A673 (cell line): ENCODE measurements at regions of chr1 and their contacts with region 1.

Region 1: GRCh38 chr1:221435504-221435904 is 306.4 kb downstream of the DUSP10 start:
- DNase-seq: peak; percentile 53
- H3K4me3 ChIP-seq: no peak overlapping the region
- H3K27ac ChIP-seq: no peak overlapping the region
- H3K4me1 ChIP-seq: no peaks in the 10 kb centered on the region
- H3K27me3 ChIP-seq: no peaks in the 10 kb centered on the region
- CTCF ChIP-seq: peak; percentile 83

Region 2: GRCh38 chr1:220810179-220810653 is 625.3 kb before region 1 on chr1:
- CTCF ChIA-PET with region 1: no interaction called
- POLR2A ChIA-PET with region 1: no interaction called
- intact Hi-C with region 1: loop called (anchors 1 kb)
- DNase-seq: peak; percentile 87
- H3K4me3 ChIP-seq: peak overlapping the region; percentile 14
- H3K27ac ChIP-seq: no peak overlapping the region
- H3K4me1 ChIP-seq: peaks cover 7% of the 10 kb centered on the region
- H3K27me3 ChIP-seq: no peaks in the 10 kb centered on the region
- CTCF ChIP-seq: peak; percentile 92

Region 3: GRCh38 chr1:220873868-220874655 is 561.4 kb before region 1 on chr1:
- CTCF ChIA-PET with region 1: no interaction called
- POLR2A ChIA-PET with region 1: no interaction called
- intact Hi-C with region 1: loop called (anchors 1 kb)
- DNase-seq: peak; percentile 52
- H3K4me3 ChIP-seq: no peak overlapping the region
- H3K27ac ChIP-seq: no peak overlapping the region
- H3K4me1 ChIP-seq: no peaks in the 10 kb centered on the region
- H3K27me3 ChIP-seq: peaks cover 41% of the 10 kb centered on the region
- CTCF ChIP-seq: peak; percentile 72

Region 4: GRCh38 chr1:221263831-221264767 is 171.4 kb before region 1 on chr1:
- CTCF ChIA-PET with region 1: interaction called, 15 read pairs
- POLR2A ChIA-PET with region 1: no interaction called
- intact Hi-C with region 1: loop called (anchors 2 kb)
- DNase-seq: peak; percentile 83
- H3K4me3 ChIP-seq: no peak overlapping the region
- H3K27ac ChIP-seq: no peak overlapping the region
- H3K4me1 ChIP-seq: no peaks in the 10 kb centered on the region
- H3K27me3 ChIP-seq: peaks cover under 1% of the 10 kb centered on the region
- CTCF ChIP-seq: peak; percentile 66

Region 5: GRCh38 chr1:221517961-221518360 is 82.5 kb after region 1 on chr1:
- CTCF ChIA-PET with region 1: no interaction called
- POLR2A ChIA-PET with region 1: no interaction called
- intact Hi-C with region 1: no loop called
- DNase-seq: no peak
- H3K4me3 ChIP-seq: no peak overlapping the region
- H3K27ac ChIP-seq: no peak overlapping the region
- H3K4me1 ChIP-seq: no peaks in the 10 kb centered on the region
- H3K27me3 ChIP-seq: no peaks in the 10 kb centered on the region
- CTCF ChIP-seq: no peak